ENCODE measurements at regions of chr9 and their contacts with region 1.

Region 1: DNA sequence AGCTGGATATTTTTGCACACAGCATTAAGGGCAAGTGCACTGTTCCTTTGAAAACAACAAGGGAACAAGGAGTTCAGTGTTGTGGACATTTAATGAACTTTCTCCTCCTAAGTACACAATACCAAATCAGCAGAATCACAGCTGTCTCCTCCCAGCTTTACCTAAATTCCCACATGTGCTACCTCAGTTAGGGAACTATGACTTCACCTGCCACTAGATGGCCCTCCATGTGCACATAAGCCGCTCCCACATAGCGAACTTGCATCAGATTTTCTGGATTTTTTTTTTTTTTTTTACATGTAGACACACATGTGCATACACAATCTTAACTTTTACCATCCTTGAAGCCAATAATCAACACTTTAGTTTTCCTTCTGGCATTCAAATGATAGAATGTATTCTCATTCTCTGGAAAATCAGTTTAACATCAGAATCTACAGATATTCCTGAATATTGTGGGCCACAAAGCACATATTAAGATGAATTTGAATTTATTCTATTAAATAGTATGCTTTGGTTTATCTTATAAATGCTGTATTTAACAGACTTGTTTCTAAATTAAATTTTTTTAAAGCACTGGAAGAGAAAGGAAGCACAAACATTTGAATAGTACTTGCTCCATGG is 123.6 kb downstream of the PALM2AKAP2 start:
- DNase-seq: peak; percentile 87
- H3K27ac ChIP-seq: no peak overlapping the region
- CTCF ChIP-seq: peak; percentile 98

Region 2: DNA sequence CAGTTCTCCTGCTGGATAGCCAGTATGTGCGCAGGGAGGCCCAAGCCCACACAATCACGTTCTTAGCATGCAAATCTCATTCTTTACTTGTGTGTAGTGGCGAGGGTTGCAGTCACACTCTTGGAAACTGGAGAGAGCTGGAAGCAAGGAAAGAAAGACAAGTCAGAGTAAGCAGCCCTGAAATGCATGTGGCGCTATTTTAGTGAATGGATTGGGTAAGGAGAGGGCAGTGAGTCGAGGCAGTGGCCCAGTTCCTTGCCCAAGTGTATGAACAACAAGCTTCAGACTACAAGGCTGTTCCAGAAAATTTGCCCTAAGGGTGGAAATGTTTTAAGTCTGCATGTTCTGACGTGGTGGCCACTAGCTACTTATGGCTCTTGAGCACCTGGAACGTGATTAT is 346.2 kb before region 1 on chr9:
- CTCF ChIA-PET with region 1: interaction called, 10 read pairs
- POLR2A ChIA-PET with region 1: no interaction called
- DNase-seq: no peak
- H3K27ac ChIP-seq: peak overlapping the region; percentile 80
- CTCF ChIP-seq: no peak

Region 3: GRCh38 chr9:110058304-110058953 is 154.8 kb after region 1 on chr9:
- CTCF ChIA-PET with region 1: interaction called, 59 read pairs
- POLR2A ChIA-PET with region 1: no interaction called
- DNase-seq: peak; percentile 82
- H3K27ac ChIP-seq: no peak overlapping the region
- CTCF ChIP-seq: no peak; the same call in 1 of the 2 replicates

Region 4: DNA sequence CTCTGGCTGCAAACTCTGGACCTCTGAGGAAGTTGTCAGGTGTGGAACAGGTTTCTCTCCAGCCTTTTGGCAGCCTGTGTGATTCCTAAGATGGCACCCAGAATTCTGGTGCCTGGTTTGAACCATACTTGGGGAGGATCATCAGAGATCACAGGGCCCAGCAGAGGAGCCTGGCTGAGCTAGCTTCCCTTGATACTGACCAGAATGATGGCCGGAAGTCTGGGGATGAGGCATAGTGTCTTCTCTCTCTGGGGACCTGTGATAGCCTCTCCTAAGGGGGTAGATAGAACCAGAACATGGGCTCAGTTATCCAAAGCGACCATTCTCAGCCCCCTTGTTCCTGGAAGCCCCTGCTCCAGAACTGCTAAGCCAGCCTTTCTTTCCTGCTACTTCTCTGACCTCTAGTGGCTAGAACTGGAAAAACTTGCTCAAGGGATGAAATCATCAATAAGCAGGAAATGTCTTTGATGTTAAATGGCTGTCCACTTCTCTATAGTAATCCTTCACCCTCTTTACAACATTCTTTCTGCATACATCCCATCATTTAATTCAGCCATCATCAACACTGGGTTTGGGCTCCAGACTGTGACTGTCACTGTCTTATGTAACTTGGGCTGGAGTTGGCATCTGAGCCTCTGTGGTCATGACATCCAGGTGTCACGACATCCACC is 249.2 kb after region 1 on chr9:
- CTCF ChIA-PET with region 1: interaction called, 17 read pairs
- POLR2A ChIA-PET with region 1: no interaction called
- DNase-seq: peak; percentile 67
- H3K27ac ChIP-seq: peak overlapping the region; percentile 30; the same call in 1 of the 2 replicates
- CTCF ChIP-seq: peak; percentile 89

Region 5: DNA sequence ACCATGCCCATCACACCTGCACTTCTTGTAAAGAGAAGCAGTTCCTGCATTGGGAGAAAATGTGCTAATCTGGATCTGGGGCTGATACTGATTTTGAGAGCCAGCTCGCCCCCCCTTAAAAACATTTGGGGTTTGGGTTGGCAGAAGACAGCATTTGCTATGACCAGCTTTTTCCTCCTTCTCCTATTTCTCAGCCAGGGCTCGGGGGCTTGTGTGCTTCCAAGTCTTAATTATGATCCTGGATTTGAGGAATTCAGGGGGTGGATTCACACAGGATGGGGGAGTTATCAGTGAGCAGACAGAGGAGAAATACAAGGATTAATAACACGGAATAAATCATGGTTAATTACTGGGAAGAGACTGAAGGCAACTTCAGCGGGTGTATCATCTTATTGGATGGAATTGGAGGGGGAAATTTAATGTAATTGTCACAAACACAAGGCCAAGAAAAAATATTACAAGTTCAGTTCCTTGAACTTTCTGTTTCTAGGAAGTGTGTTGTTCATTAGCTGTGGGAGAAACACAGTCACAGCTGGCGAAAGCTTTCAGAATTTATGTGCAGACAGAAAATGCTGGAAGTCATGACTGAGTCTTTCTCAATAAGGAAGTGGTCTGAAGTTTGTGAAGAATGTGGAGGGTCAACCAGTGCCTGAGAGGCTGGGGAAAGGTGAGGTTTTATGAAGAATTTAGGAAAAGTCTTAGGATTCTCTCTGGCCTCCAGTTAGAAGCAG is 289.1 kb after region 1 on chr9:
- CTCF ChIA-PET with region 1: no interaction called
- POLR2A ChIA-PET with region 1: no interaction called
- DNase-seq: no peak
- H3K27ac ChIP-seq: no peak overlapping the region
- CTCF ChIP-seq: no peak

Region 6: DNA sequence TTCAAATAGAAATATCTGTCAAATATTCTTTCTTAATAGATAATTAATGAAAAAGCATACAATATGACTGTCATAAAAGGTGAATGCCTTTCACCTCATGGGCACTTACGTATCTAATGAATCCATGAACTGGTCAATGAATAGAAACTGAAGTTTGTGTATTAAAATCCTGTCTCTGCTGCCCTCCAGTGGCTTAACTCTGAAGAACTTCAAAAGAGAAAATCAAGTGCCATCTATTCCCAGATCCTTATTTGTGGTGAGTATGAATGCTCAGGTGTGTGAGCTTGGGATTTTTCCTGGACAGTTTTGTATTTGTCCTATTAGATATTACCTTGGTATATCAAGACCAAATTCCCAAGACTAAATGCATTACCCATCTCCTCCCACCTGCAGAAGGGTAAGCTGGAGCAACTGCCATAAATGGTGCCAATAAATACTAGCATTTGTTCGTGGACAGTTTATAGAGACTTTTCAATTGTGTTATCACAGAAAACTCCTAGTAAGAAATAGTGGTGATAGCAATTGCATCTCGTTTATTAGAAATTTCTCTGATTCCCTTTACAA is 719.9 kb after region 1 on chr9:
- CTCF ChIA-PET with region 1: interaction called, 10 read pairs
- POLR2A ChIA-PET with region 1: no interaction called
- DNase-seq: peak; percentile 76
- H3K27ac ChIP-seq: no peak overlapping the region
- CTCF ChIP-seq: peak; percentile 89

Measured in RWPE1 (cell line).